Posterior vena cava (tissue), 2 donors: ENCODE measurements at regions of chr5 and their contacts with region 1.

Region 1: DNA sequence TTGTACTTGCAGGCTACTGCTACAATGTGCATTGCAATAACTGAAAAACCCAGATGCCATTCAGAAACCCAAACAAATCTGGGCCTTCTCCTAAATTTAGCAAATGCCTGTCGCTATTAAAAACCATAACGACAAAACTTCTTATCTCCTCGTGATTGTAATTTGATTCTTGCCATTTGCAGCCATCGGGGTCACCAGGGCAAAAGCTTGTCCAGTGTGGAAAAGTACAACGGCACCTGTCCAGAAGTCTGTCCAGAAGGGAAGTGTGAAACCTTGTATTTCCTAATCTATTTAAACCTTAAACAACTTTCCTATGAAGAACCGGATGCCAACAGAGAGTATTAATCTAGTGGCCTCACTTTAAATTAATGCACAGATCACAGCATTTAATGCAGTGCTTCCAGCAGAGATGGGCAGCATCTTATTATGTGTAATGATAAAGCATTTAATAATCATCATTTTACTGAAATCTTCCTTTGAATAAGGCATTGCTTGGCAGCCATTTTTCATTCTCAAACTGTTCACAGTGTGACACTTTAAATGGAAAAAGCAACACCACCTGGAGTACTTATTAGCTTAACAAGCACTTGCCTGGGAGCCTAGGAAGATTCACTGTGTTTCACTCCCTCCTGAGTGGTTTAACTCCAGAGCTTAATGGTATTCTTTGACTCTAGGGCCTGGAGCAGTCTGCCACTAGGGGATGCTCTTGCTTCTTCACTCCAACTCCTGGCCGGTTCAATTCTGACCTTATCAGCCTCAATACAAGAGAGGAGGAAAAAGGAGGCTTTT is 4.9 kb upstream of the C7 start:
- DNase-seq: no peak

Region 2: GRCh38 chr5:40834849-40835787 is 69.3 kb before region 1 on chr5 and contains the start of gene RPL37:
- intact Hi-C with region 1: no loop called
- DNase-seq: peak; percentile 99
- total RNA-seq, gene RPL37: 738 to 822 TPM

Region 3: DNA sequence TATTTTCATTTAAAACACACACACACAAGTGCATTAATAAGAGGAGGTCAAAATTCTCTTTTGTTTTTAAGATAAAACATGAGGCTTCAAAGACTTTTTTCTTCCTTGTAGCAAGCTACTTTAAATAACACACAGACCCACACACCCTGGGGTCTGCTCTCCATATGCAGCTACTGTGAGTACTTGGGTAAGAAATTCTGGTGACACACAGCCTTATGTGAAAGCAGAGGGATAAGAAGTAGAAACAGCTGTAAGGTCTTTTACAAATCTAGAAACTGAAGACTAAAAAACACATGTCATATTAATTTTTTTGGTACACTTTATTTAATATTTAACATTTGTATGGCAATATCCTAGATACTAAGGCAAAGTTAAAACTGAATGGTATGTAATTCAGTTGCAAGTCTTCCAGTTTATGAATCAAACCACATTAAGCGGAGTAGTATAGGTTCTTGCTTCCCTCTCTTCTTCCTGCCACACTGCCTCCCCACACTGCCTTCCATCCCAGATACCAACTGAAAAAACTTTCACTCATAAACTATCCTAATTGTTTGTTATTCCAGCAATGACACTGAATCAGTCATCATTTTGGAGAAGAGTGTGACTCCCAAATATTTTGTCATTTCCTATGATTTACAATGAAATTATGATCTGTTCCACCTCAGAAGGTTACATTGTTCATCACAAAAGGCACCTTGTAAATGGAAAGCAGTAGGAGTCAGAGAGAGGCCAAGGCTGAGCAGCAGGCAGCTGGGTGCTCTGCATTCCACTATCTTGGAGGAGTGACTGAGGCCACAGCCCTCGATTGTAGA is 514.0 kb after region 1 on chr5:
- intact Hi-C with region 1: loop called in 1 of 2 experiments (anchors 10 kb)
- DNase-seq: no peak

Region 4: GRCh38 chr5:41835645-41836044 is 931.2 kb after region 1 on chr5:
- intact Hi-C with region 1: loop called in 1 of 2 experiments (anchors 10 kb)
- DNase-seq: peak; percentile 83

Region 5: GRCh38 chr5:42429694-42430093 is 1525.3 kb after region 1 on chr5:
- intact Hi-C with region 1: loop called in 1 of 2 experiments (anchors 5 kb)
- DNase-seq: no peak